ENCODE measurements at regions of chr6 and their contacts with region 1.

Region 1: GRCh38 chr6:63571881-63572732 is at the starts of genes LOC128125822 and PTP4A1:
- DNase-seq: peak; percentile 97 to 99
- ATAC-seq: peak; percentile 87 to 91 (median 88)
- H3K4me3 ChIP-seq: peak within 1 kb of the TSS; percentile 95
- H3K27ac ChIP-seq: peak within 1 kb of the TSS; percentile 99
- H3K4me1 ChIP-seq: peaks cover 17% of the 10 kb centered on the region
- H3K27me3 ChIP-seq: no peaks in the 10 kb centered on the region
- CTCF ChIP-seq: no peak
- total RNA-seq, gene PTP4A1: 153 to 202 (median 184) TPM

Region 2: DNA sequence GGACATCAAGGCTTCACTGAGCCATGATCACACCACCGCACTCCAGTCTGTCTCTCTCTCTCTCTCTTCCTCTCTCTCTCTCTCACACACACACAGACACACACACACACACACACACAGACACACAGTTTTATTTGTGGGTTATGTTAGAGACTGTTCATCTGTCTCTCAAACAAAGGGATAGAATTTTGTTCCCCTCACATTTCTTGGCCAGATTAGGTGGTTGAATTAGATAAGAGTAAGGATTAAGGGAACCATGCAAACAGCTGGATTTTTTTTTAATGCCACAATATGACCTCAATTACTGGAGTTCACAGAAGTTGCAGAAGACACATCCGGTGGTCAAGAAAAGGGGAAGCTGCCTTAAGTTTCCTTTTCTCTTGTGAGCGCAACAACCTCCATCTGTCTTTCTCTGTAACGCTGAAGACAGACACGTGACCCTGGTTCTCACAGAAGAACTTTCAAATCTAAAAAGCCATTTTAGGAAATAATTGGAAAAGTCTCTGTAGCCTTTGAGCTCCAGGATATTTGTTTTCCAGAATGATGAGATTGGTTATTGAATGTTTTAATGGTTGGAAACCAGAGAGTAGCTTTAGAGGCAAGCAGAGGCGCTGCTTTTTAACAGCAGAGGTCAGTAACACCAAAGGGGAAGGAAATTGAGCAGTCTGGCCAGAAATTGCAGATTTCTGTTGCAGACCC is 219.4 kb before region 1 on chr6:
- intact Hi-C with region 1: loop called (anchors 5 to 10 kb)
- DNase-seq: no peak
- ATAC-seq: peak; percentile 64 to 95 (median 76)
- H3K4me3 ChIP-seq: peak overlapping the region; percentile 21
- H3K27ac ChIP-seq: peak overlapping the region; percentile 10
- H3K4me1 ChIP-seq: peaks cover 4% of the 10 kb centered on the region
- H3K27me3 ChIP-seq: no peaks in the 10 kb centered on the region
- CTCF ChIP-seq: peak; percentile 62

Region 3: DNA sequence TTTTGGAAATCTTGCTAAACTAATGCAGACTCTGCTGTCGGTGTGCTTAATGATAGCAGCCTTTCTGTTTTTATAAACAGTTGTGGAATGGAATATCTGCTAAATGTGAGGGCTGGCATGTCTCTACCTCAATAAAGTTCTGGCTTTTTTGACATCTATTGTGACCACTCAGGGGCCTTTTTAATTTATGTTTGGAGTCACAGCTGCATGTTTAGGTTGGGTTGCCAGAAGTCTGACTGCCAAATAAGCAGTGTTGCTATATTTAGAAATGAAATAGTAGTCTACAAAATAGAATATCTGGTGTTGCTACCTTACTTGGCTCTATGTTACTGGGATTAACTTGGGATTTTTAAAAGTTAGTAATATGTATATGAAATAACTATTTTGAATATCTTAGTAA is 125.0 kb before region 1 on chr6:
- intact Hi-C with region 1: loop called in 1 of 2 experiments (anchors 5 kb)
- DNase-seq: no peak
- ATAC-seq: peak; percentile 77 to 94 (median 85)
- H3K4me3 ChIP-seq: no peak overlapping the region
- H3K27ac ChIP-seq: peak overlapping the region; percentile 82
- H3K4me1 ChIP-seq: peaks cover 20% of the 10 kb centered on the region
- H3K27me3 ChIP-seq: no peaks in the 10 kb centered on the region
- CTCF ChIP-seq: no peak

Region 4: GRCh38 chr6:63476302-63476701 is 95.8 kb before region 1 on chr6:
- intact Hi-C with region 1: loop called (anchors 10 kb)
- DNase-seq: no peak
- ATAC-seq: peak; percentile 74 to 84 (median 79)
- H3K4me3 ChIP-seq: peak overlapping the region; percentile 48
- H3K27ac ChIP-seq: peak overlapping the region; percentile 90
- H3K4me1 ChIP-seq: peaks cover 14% of the 10 kb centered on the region
- H3K27me3 ChIP-seq: no peaks in the 10 kb centered on the region
- CTCF ChIP-seq: peak; percentile 22

Region 5: DNA sequence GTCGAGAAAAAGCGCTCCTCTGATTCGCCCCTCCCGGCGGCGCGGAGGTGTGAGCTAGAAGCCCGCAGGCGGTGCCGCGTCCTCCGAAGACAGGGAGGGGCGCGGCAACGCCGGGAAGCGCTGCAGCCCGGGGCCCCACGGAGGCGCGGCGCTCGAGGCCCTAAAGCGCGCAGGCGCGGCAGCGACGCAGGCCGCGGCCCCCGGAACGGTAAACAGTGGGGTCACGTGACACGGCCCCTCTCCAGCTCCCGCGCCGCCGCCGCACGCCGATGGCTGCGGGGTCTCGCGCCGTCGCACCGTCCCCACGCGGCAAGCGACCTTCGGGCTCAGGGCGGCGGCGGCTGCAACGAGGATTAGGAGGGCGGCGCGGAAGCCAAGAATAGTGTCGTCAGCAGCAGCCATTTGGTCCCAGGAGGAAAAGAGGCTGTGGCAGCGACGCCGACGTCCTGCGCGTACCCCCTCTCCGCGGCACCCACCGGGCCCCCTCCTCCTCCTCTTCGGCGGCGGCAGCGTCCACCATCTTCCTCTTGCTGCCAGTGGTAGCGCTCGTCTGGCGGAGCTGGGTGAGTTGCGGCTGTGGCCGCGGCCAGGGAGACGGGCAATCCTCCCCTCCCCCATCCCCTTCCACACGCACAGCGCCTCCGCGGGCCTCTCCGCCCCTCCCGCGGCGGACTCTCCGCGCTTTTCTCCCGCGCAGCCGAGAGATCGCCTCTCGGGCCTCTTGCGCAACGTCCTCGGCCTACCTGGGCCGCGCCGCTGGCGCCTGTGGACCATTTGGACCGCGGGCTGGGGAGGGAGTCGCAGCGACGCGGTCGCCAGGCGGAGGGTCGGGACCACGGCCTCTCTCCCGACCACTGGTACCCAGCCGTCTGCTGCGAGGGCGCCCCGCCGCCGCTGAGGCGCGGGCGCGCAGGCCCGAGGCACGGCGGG is 63.7 kb after region 1 on chr6 and contains the start of gene PHF3:
- intact Hi-C with region 1: loop called in 1 of 2 experiments (anchors 5 kb)
- DNase-seq: peak; percentile 91 to 96
- ATAC-seq: peak; percentile 94 to 96 (median 94)
- H3K4me3 ChIP-seq: peak within 1 kb of the TSS; percentile 93
- H3K27ac ChIP-seq: peak within 1 kb of the TSS; percentile 95
- H3K4me1 ChIP-seq: peaks cover 36% of the 10 kb centered on the region
- H3K27me3 ChIP-seq: no peaks in the 10 kb centered on the region
- CTCF ChIP-seq: no peak
- total RNA-seq, gene PHF3: 24.0 to 38.6 (median 36.6) TPM

Region 6: DNA sequence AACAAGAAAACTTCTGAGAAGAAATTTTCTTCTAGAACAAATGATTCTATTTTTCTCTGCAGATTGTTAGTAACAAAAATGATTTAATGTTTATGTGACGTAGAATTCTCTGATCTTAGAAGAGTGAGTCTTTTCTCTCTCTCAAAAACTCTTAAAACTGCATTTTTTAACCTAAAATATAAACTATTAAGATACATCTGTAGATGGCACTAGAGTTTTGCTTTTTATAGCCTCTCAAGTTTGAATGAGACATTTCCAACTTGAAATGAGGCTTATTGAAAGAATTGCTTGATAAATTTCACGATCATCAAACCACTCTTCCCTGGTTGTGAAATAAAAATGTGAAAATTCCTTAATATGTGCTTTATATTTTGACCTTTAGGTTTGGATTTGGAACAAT is 117.3 kb after region 1 on chr6:
- intact Hi-C with region 1: no loop called
- DNase-seq: no peak
- ATAC-seq: no peak
- H3K4me3 ChIP-seq: no peak overlapping the region
- H3K27ac ChIP-seq: no peak overlapping the region
- H3K4me1 ChIP-seq: no peaks in the 10 kb centered on the region
- H3K27me3 ChIP-seq: no peaks in the 10 kb centered on the region
- CTCF ChIP-seq: no peak